ENCODE measurements at regions of chr13 and their contacts with region 1.

Region 1: DNA sequence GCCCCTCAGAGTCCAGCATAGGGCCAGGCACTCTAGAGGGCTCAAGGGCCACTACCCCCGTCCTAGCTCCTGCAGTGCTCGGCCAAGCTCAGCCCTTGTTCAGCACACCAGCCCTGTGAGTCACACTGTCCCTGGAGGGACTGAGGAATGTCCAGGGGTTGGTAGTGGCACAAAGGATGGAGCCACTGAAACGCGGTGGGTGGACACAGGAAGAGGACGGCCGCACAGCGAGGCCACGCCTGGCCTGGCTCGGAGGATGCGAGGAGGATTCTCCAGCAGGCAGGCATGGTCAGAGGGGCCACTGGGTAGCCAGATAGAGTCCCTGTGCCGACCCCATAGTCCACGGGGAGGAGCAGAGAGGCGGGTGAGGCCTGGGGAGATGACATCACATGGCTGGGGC is 45.7 kb downstream of the C1QTNF9 start:
- DNase-seq: no peak
- ATAC-seq: peak; percentile 32
- H3K4me3 ChIP-seq: no peak overlapping the region
- H3K27ac ChIP-seq: no peak overlapping the region
- H3K4me1 ChIP-seq: no peaks in the 10 kb centered on the region
- H3K27me3 ChIP-seq: 0 out of 5 replicates have a peak, but pooled peaks cover 0 to 7% of the 10 kb centered on the region in 2 experiments
- CTCF ChIP-seq: no peak
- EP300 ChIP-seq: no peak
- POLR2A ChIP-seq: no peak
- RAD21 ChIP-seq: no peak

Region 2: DNA sequence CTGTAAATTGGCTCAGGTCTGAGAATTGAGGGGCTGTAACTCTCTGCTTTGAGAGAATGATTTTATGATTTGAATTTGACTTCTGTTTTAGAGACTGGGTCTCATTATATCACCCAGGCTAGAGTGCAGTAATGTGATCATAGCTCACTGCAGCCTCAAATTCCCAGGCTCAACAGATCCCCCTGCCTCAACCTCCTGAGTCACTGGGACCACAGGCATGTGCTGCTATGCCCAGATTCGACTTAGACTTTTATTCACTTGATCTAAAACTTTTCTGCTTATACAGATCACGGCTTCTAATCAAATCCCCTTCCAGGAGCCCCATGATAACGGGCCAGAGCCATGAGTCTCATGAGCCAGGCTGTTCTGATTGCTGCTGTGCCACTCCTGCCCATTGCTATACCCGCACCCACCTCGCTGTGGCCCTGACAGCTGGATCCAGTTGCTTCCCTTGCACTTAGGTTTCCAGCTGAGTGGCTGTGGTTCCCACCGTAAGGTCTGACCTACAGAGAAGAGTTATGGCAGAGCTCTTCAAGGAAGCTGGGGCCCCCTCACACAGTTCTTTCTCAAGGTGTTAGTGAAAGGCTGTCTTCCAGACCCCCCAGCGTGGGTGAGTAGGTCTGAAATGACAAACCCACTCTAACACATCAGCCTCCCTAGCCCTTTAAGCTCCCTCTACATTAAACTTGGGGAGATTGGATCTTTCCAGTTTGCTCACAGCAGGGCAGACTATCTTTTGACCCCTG is 1425.5 kb before region 1 on chr13:
- CTCF ChIA-PET with region 1: no interaction called
- POLR2A ChIA-PET with region 1: no interaction called
- in situ Hi-C with region 1: loop called (anchors 10 kb)
- intact Hi-C with region 1: loop called (anchors 10 kb)
- DNase-seq: no peak
- ATAC-seq: no peak
- H3K4me3 ChIP-seq: no peak overlapping the region
- H3K27ac ChIP-seq: no peak overlapping the region
- H3K4me1 ChIP-seq: no peaks in the 10 kb centered on the region
- H3K27me3 ChIP-seq: no peaks in the 10 kb centered on the region
- CTCF ChIP-seq: no peak
- EP300 ChIP-seq: no peak
- POLR2A ChIP-seq: no peak
- RAD21 ChIP-seq: no peak

Measured in HepG2 (cell line).